HEK293T (cell line): ENCODE measurements at regions of chr1 and their contacts with region 1.

Region 1: GRCh38 chr1:235160957-235161684 is at the start of gene RBM34:
- DNase-seq: peak; percentile 98

Region 2: DNA sequence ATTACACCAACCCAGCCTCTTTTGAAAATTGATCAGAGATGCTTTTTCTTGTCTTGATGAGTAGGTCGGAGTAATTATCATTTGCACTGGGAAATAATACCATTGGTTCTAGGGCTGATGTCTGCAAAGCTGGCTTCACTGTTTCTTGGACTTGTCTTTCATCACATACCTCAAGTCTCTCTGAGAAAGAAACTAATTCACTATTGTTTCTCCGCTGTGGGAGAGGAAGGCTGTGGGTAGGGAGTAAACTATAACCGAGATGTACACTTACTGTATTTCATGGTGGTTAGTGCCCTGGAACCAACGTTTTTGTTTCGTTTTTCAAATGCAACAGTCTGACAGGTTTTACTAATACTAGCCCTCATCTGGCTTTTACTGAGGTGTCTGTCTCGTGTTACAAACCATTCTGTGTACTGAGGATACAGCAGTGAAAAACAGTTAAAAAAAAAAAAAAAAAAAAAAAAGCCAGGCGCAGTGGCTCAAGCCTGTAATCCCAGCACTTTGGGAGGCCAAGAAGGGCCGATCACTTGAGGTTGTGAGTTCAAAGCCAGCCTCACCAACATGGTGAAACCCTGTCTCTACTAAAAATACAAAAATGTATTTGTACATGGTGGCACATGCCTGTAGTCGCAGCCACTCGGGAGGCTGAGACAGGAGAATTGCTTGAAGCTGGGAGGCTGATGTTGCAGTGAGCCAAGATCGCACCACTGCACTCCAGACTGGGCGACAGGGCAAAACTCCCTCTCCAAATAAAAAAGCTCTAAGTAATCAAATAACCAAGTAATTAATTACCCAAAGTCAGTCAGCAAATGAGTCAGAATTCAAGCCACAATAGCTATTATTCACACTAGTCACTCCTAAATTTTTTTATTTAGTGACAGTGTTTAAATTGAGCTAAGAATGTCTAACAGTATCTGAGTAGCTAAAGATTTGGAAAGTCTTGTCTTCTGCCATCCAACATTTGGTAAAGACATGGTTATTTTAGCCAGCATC is 55.8 kb before region 1 on chr1:
- CTCF ChIA-PET with region 1: interaction called, 3 read pairs
- POLR2A ChIA-PET with region 1: interaction called, 13 read pairs
- DNase-seq: no peak

Region 3: GRCh38 chr1:235128456-235129328 is 32.4 kb before region 1 on chr1 and contains the start of gene TOMM20:
- CTCF ChIA-PET with region 1: no interaction called
- POLR2A ChIA-PET with region 1: interaction called, 27 read pairs
- DNase-seq: peak; percentile 100

Region 4: GRCh38 chr1:235147269-235147668 is 13.9 kb before region 1 on chr1:
- CTCF ChIA-PET with region 1: interaction called, 9 read pairs
- POLR2A ChIA-PET with region 1: interaction called, 11 read pairs
- DNase-seq: no peak

Region 5: DNA sequence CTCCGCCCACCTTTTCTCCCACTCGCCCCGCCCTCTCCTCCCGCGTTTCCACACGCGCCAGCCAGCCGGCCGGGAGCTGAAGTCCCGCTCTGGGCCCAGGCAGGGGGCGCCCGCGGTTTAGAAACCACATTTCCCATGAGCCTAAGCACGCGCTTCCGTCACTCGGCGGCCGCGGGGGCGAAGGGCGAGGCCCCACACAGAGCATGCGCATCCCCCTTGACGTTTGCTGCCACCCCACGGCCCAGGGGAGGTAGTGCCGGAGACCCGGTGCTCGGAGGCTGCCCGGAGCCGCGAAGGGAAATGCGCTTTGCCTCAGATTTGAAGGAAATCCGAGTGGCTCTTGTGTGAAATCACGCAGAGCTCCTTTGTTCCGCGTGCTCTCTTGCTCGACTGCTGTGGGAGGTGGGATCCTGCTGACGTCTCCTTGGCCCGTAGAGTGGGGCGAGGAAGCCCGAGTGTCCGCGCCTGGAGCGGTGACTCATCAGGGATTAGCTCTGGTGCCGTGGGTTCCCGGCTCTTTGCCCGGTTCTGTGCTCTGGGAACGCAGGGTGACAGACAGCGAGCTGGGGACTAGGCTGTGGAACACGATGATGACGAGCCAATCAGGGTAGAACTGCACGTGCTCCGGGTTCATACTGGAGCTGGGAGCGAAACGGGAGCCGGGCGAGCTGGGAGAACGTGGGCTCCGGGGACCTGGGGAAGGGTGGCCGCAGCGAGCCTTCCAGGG is 343.5 kb after region 1 on chr1:
- CTCF ChIA-PET with region 1: no interaction called
- POLR2A ChIA-PET with region 1: interaction called, 14 read pairs
- DNase-seq: peak; percentile 99